RWPE1 (cell line): ENCODE measurements at regions of chr17 and their contacts with region 1.

Region 1: GRCh38 chr17:17573912-17574311 is 17.6 kb downstream of the PEMT start:
- DNase-seq: no peak
- H3K27ac ChIP-seq: no peak overlapping the region
- CTCF ChIP-seq: no peak

Region 2: GRCh38 chr17:17561408-17562145 is 12.3 kb before region 1 on chr17:
- CTCF ChIA-PET with region 1: interaction called, 5 read pairs
- POLR2A ChIA-PET with region 1: interaction called, 11 read pairs
- DNase-seq: peak; percentile 60
- H3K27ac ChIP-seq: peak overlapping the region; percentile 76
- CTCF ChIP-seq: no peak

Region 3: GRCh38 chr17:17766077-17766743 is 192.3 kb after region 1 on chr17:
- CTCF ChIA-PET with region 1: no interaction called
- POLR2A ChIA-PET with region 1: no interaction called
- DNase-seq: no peak
- H3K27ac ChIP-seq: peak overlapping the region; percentile 52
- CTCF ChIP-seq: no peak